AG04449 (cell line): ENCODE measurements at regions of chr4 and their contacts with region 1.

Region 1: DNA sequence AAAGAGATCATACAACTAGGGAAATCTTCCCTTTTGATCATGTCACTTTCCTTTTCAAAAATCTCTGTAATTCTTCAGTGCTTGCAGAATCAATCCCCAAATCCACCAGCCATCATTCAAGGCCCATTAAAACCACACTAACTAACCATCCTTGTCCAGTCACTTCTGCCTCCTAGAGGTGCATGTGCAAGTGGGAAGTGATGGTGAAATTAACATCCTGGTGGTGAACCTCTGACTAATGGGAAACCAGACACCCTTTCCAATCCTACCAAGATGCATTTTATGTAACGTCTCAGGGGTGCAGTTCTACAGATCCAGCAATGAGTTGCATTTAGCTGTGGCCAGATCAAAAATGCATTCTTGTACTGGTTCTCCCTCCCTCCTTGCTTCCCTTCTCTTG is 341.8 kb downstream of the RAPGEF2 start:
- DNase-seq: no peak
- H3K4me3 ChIP-seq: no peak overlapping the region
- CTCF ChIP-seq: peak; percentile 13

Region 2: GRCh38 chr4:159455675-159456237 is 11.1 kb after region 1 on chr4:
- CTCF ChIA-PET with region 1: interaction called, 17 read pairs
- POLR2A ChIA-PET with region 1: no interaction called
- DNase-seq: no peak
- H3K4me3 ChIP-seq: no peak overlapping the region
- CTCF ChIP-seq: peak; percentile 68

Region 3: GRCh38 chr4:159757499-159757898 is 312.8 kb after region 1 on chr4:
- CTCF ChIA-PET with region 1: no interaction called
- POLR2A ChIA-PET with region 1: no interaction called
- DNase-seq: no peak
- H3K4me3 ChIP-seq: no peak overlapping the region
- CTCF ChIP-seq: no peak